ENCODE measurements at regions of chr4 and their contacts with region 1.

Region 1: GRCh38 chr4:145234091-145234706 is 53.8 kb upstream of the OTUD4 start:
- DNase-seq: peak in 13 of 14 experiments; percentile 8 to 72 (median 32)
- ATAC-seq: peak; percentile 97
- H3K4me3 ChIP-seq: no peak overlapping the region
- H3K4me3 Mint-ChIP-seq: no peak overlapping the region
- H3K27ac ChIP-seq: no peak overlapping the region
- H3K27ac Mint-ChIP-seq: no peak overlapping the region
- H3K4me1 ChIP-seq: no peaks in the 10 kb centered on the region
- H3K4me1 Mint-ChIP-seq: no peaks in the 10 kb centered on the region
- H3K27me3 ChIP-seq: no peaks in the 10 kb centered on the region
- H3K27me3 Mint-ChIP-seq: peaks cover 5% of the 10 kb centered on the region
- CTCF ChIP-seq: peak; percentile 89

Region 2: GRCh38 chr4:145170223-145170622 is 64.0 kb before region 1 on chr4:
- CTCF ChIA-PET with region 1: no interaction called
- POLR2A ChIA-PET with region 1: no interaction called
- intact Hi-C with region 1: no loop called
- DNase-seq: no peak
- ATAC-seq: no peak
- H3K4me3 ChIP-seq: no peak overlapping the region
- H3K4me3 Mint-ChIP-seq: no peak overlapping the region
- H3K27ac ChIP-seq: no peak overlapping the region
- H3K27ac Mint-ChIP-seq: peak overlapping the region; percentile 16
- H3K4me1 ChIP-seq: no peaks in the 10 kb centered on the region
- H3K4me1 Mint-ChIP-seq: peaks cover 46% of the 10 kb centered on the region
- H3K27me3 ChIP-seq: no peaks in the 10 kb centered on the region
- H3K27me3 Mint-ChIP-seq: no peaks in the 10 kb centered on the region
- CTCF ChIP-seq: no peak

Region 3: DNA sequence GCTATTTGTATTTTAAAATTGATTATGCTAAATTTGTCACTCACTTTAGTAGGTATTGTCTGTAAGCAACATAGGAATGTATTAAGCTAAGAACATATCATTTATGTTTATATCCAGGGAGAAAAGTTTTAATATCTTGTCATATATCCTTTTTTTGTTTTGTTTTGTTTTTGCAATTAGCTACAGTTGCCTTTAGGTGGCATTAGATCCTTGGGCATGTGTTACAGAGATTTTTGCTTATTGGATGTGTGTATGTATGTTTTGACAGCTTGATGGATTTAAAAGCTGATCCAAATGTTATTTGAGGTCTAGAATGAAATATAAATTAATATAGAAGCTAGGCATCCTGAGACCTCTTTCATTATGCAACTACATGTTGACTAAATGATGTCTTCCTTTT is 17.7 kb before region 1 on chr4:
- CTCF ChIA-PET with region 1: no interaction called
- POLR2A ChIA-PET with region 1: no interaction called
- intact Hi-C with region 1: no loop called
- DNase-seq: no peak
- ATAC-seq: no peak
- H3K4me3 ChIP-seq: no peak overlapping the region
- H3K4me3 Mint-ChIP-seq: no peak overlapping the region
- H3K27ac ChIP-seq: no peak overlapping the region
- H3K27ac Mint-ChIP-seq: no peak overlapping the region
- H3K4me1 ChIP-seq: no peaks in the 10 kb centered on the region
- H3K4me1 Mint-ChIP-seq: no peaks in the 10 kb centered on the region
- H3K27me3 ChIP-seq: no peaks in the 10 kb centered on the region
- H3K27me3 Mint-ChIP-seq: no peaks in the 10 kb centered on the region
- CTCF ChIP-seq: peak; percentile 21

Region 4: DNA sequence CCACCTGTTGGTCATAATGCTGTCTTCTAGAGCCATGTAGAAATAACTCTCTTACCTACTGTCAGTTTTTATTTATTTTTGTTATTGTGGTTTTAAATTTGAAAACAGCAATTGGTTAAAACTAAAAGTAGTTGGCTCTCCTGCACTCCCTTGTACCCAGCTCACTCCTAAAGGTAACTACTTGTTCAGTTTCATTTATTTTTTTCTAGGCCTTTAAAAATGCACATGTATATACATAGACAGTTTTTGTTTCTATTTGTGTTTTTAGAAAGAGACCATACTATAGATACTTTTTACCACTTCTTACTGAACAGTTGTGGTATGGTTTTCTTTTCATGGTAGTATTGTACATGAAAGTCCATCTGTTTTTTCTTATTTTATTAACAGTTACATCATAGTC is 264.2 kb after region 1 on chr4:
- CTCF ChIA-PET with region 1: no interaction called
- POLR2A ChIA-PET with region 1: no interaction called
- intact Hi-C with region 1: loop called (anchors 1 to 5 kb)
- DNase-seq: no peak
- ATAC-seq: no peak
- H3K4me3 ChIP-seq: no peak overlapping the region
- H3K4me3 Mint-ChIP-seq: no peak overlapping the region
- H3K27ac ChIP-seq: no peak overlapping the region
- H3K27ac Mint-ChIP-seq: no peak overlapping the region
- H3K4me1 ChIP-seq: no peaks in the 10 kb centered on the region
- H3K4me1 Mint-ChIP-seq: peaks cover 72% of the 10 kb centered on the region
- H3K27me3 ChIP-seq: no peaks in the 10 kb centered on the region
- H3K27me3 Mint-ChIP-seq: no peaks in the 10 kb centered on the region
- CTCF ChIP-seq: no peak

Region 5: GRCh38 chr4:145541346-145541745 is 307.1 kb after region 1 on chr4:
- CTCF ChIA-PET with region 1: no interaction called
- POLR2A ChIA-PET with region 1: no interaction called
- intact Hi-C with region 1: no loop called
- DNase-seq: no peak
- ATAC-seq: no peak
- H3K4me3 ChIP-seq: no peak overlapping the region
- H3K4me3 Mint-ChIP-seq: no peak overlapping the region
- H3K27ac ChIP-seq: no peak overlapping the region
- H3K27ac Mint-ChIP-seq: no peak overlapping the region
- H3K4me1 ChIP-seq: no peaks in the 10 kb centered on the region
- H3K4me1 Mint-ChIP-seq: no peaks in the 10 kb centered on the region
- H3K27me3 ChIP-seq: peaks cover 0 to 3% of the 10 kb centered on the region in 2 experiments
- H3K27me3 Mint-ChIP-seq: no peaks in the 10 kb centered on the region
- CTCF ChIP-seq: no peak

Region 6: DNA sequence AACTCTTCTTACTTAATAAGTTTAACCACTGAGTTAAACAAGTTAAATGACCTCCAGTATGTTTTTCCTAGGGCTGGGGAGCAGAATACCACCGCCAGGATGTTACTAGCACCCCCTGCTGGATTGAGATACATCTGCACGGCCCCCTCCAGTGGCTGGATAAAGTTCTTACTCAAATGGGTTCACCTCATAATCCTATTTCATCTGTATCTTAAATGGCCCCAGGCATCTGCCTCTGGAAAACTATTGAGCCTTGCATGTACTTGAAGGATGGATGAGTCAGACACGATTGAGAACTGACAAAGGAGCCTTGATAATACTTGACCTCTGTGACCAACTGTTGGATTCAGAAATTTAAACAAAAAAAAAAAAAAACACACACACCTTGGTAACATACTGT is 323.5 kb after region 1 on chr4:
- CTCF ChIA-PET with region 1: no interaction called
- POLR2A ChIA-PET with region 1: no interaction called
- intact Hi-C with region 1: loop called (anchors 1 kb)
- DNase-seq: peak in 11 of 14 experiments; percentile 11 to 65 (median 28)
- ATAC-seq: peak; percentile 97
- H3K4me3 ChIP-seq: no peak overlapping the region
- H3K4me3 Mint-ChIP-seq: no peak overlapping the region
- H3K27ac ChIP-seq: no peak overlapping the region
- H3K27ac Mint-ChIP-seq: no peak overlapping the region
- H3K4me1 ChIP-seq: no peaks in the 10 kb centered on the region
- H3K4me1 Mint-ChIP-seq: no peaks in the 10 kb centered on the region
- H3K27me3 ChIP-seq: no peaks in the 10 kb centered on the region
- H3K27me3 Mint-ChIP-seq: no peaks in the 10 kb centered on the region
- CTCF ChIP-seq: peak; percentile 91

Region 7: GRCh38 chr4:145609481-145610427 is 375.6 kb after region 1 on chr4:
- CTCF ChIA-PET with region 1: no interaction called
- POLR2A ChIA-PET with region 1: no interaction called
- intact Hi-C with region 1: loop called (anchors 1 to 2 kb)
- DNase-seq: peak; percentile 32 to 76 (median 51)
- ATAC-seq: peak; percentile 85
- H3K4me3 ChIP-seq: no peak overlapping the region
- H3K4me3 Mint-ChIP-seq: no peak overlapping the region
- H3K27ac ChIP-seq: no peak overlapping the region
- H3K27ac Mint-ChIP-seq: no peak overlapping the region
- H3K4me1 ChIP-seq: no peaks in the 10 kb centered on the region
- H3K4me1 Mint-ChIP-seq: peaks cover 6% of the 10 kb centered on the region
- H3K27me3 ChIP-seq: no peaks in the 10 kb centered on the region
- H3K27me3 Mint-ChIP-seq: peaks cover 9% of the 10 kb centered on the region
- CTCF ChIP-seq: peak; percentile 75

Region 8: GRCh38 chr4:146916479-146917076 is 1682.4 kb after region 1 on chr4:
- CTCF ChIA-PET with region 1: no interaction called
- POLR2A ChIA-PET with region 1: no interaction called
- intact Hi-C with region 1: loop called in 1 of 2 experiments (anchors 10 kb)
- DNase-seq: peak in 4 of 14 experiments; percentile 7 to 48 (median 40)
- ATAC-seq: no peak
- H3K4me3 ChIP-seq: no peak overlapping the region
- H3K4me3 Mint-ChIP-seq: no peak overlapping the region
- H3K27ac ChIP-seq: no peak overlapping the region
- H3K27ac Mint-ChIP-seq: no peak overlapping the region
- H3K4me1 ChIP-seq: no peaks in the 10 kb centered on the region
- H3K4me1 Mint-ChIP-seq: no peaks in the 10 kb centered on the region
- H3K27me3 ChIP-seq: peaks cover 0 to 15% of the 10 kb centered on the region in 2 experiments
- H3K27me3 Mint-ChIP-seq: peaks cover 7% of the 10 kb centered on the region
- CTCF ChIP-seq: peak; percentile 45

Measured in CD4-positive, alpha-beta T cell (primary cell).